Lower leg skin (tissue), 4 donors: ENCODE measurements at regions of chr20 and their contacts with region 1.

Region 1: GRCh38 chr20:9609887-9610502 is 95.6 kb downstream of the LAMP5 start:
- DNase-seq: peak in 1 of 2 donors; percentile 54
- H3K4me3 ChIP-seq: no peak overlapping the region
- CTCF ChIP-seq: no peak
- POLR2A ChIP-seq: no peak

Region 2: DNA sequence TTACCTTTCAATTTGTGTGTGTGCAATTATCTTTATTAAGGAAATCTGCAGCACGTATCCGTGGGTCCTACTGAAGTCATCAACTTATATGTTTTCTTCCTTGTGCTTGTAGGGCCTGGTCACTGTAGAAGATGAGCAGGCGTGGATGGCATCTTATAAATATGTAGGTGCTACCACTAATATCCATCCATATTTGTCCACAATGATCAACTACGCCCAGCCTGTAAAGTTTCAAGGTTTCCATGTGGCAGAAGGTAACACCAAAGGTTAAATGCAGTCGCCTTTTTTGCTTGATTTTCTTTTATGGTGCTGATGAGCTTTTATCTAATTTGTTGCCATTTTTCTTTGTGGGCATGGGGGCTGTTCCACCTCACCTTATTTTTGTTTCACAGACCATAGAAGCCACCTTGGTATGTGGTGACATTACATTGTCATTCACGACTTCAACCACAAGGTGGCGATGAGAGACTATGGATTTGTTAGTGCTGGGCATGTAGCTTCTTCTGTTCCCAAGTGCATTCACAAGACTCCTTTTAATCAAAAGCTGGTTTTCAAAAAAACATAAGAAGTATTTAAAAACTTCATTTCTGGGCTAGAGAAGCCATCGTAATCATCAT is 202.1 kb before region 1 on chr20:
- intact Hi-C with region 1: loop called (anchors 5 kb)
- DNase-seq: peak in 1 of 2 donors; percentile 62
- H3K4me3 ChIP-seq: no peak overlapping the region
- CTCF ChIP-seq: no peak
- POLR2A ChIP-seq: no peak